ENCODE measurements at regions of chr3 and their contacts with region 1.

Region 1: GRCh38 chr3:130905551-130905950 is 11.7 kb downstream of the ATP2C1 start:
- DNase-seq: no peak
- H3K4me3 Mint-ChIP-seq: no peak overlapping the region
- H3K27ac Mint-ChIP-seq: no peak overlapping the region
- H3K4me1 Mint-ChIP-seq: peaks cover 51% of the 10 kb centered on the region
- H3K27me3 Mint-ChIP-seq: no peaks in the 10 kb centered on the region

Region 2: DNA sequence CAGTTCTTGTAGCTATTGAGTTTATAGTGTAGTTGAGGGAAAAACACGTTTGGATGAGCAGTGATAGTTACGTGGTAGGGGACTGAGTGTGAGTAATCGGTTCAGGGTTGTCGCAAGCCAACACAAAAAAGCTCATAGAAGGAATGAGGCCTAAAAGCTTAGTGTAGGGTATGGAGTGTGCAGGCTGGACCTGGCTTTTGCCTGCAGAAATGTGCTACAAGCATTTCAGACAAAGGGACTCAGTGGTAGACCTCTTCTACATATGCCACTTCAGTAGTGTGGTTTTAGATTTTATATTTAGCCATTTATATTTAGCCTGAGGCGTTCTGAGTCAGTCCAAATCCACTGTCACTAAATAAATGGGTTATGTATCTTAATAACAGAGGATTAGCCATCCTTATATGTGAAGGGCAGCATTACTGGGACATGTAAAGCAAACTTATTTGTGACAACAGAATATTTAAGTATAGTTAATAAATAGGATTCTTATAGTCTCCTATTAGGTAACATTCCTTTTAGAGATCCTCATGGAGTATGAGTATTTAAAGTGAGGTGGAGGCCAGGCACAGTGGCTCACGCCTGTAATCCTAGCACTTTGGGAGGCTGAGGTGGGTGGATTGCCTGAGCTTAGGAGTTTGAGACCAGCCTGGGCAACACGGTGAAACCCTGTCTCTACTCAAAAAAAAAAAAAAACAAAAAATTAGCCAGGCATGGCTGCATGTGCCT is 10.2 kb after region 1 on chr3:
- intact Hi-C with region 1: loop called (anchors 2 kb)
- DNase-seq: no peak
- H3K4me3 Mint-ChIP-seq: no peak overlapping the region
- H3K27ac Mint-ChIP-seq: no peak overlapping the region
- H3K4me1 Mint-ChIP-seq: peaks cover 24% of the 10 kb centered on the region
- H3K27me3 Mint-ChIP-seq: no peaks in the 10 kb centered on the region

Region 3: DNA sequence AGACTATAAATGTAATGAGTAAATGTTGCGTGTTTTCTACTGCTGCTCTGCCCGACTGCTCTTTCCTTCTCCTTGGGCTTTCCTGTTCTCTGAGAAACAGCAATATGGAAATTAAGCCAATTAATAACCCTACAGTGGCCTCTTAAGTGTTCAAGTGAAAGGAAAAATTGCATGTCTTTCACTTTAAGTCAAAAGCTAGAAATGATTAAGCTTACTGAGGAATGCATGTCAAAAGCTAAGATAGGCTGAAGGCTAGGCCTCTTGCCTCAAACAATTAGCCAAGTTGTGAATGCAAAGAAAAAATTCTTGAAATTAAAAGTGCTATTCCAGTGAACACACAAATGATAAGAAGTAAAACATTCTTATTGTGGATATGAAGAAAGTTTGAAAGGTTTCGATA is 43.4 kb after region 1 on chr3:
- intact Hi-C with region 1: loop called (anchors 5 kb)
- DNase-seq: no peak
- H3K4me3 Mint-ChIP-seq: no peak overlapping the region
- H3K27ac Mint-ChIP-seq: no peak overlapping the region
- H3K4me1 Mint-ChIP-seq: peaks cover 11% of the 10 kb centered on the region
- H3K27me3 Mint-ChIP-seq: no peaks in the 10 kb centered on the region

Region 4: DNA sequence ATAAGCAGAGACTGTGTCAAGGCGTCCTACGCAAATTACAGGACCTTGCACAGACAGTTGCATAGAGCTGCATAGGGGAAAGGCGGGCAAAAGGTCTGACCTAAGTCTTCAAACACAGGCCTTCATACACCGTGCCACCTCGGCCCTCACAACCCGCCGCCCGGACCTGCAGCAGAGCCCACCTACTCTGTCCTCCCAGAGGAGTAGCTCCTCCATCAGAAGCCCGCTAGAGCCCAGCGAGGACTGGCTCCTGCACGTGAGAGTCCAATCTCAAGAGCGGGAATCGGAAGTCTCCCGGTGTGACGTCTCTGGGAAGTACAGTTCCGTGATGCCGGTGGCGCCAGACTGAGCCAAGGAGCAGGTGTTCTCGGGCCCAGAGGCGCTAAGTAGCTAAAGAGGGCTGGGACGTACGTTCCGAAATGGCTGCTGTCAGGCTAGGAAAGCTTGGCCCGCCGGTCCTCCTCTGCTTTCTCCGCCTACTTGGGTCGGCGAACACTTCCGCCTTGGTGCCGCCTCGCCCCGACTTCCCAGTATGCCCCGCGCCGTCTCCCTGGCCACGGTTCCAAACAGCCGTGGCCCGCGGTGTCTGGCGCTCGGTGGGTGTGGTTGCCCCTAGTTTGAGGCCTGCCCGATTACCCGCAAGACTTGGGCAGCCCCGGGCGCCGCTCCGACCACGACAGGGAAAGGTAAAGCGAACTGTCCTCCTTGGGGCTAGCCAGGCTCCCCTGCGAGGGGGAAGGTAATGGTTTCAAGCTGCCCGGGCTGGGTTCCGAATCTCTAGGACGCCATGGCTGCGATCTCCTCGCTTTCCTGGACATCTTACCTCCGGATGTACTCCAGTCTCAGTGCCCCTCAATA is 121.0 kb after region 1 on chr3 and contains the starts of genes ASTE1 and NEK11:
- intact Hi-C with region 1: loop called (anchors 5 kb)
- DNase-seq: peak; percentile 89
- H3K4me3 Mint-ChIP-seq: peak within 1 kb of the TSS; percentile 88
- H3K27ac Mint-ChIP-seq: peak within 1 kb of the TSS; percentile 93
- H3K4me1 Mint-ChIP-seq: peaks cover 34% of the 10 kb centered on the region
- H3K27me3 Mint-ChIP-seq: peaks cover 4% of the 10 kb centered on the region
- total RNA-seq, gene ASTE1: 7.4 and 8.0 TPM in 2 replicates
- total RNA-seq, gene NEK11: 1.1 and 1.2 TPM in 2 replicates

Region 5: DNA sequence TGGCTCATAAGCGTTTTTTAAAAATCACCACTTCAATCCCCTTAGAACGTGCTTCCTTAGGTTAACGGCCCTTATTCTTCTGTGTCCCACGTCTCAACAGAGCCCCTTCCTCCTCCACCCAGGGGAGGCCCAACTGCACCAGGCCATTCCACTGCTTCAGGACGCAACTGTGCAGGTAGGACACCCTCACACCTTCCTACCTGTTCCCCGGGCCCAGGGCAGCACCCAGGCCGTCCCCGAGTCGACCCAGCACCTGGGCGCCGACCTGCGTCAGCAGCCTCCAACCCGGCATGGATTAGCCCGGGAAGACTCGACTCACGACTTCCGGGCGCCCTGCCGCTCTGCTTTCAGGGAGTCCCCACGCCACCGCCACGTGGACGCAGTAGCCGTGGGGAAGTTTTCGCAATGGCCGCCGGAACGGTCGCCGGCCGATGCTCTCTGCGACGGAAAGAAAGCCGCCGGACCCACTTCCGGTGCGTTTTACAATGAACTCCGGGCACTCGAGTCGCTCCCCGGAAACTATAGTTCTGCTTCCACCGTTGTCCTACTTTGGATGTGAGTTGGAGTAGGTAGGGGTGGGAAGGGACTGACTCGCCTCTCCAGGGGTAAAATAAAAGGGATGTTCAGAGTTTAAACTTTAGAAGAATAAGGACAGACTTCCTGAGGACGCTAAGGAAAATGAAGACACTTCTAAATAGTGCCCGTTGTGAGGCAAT is 597.1 kb after region 1 on chr3 and contains the start of gene MRPL3:
- intact Hi-C with region 1: loop called (anchors 5 kb)
- DNase-seq: peak; percentile 75
- H3K4me3 Mint-ChIP-seq: peak within 1 kb of the TSS; percentile 99
- H3K27ac Mint-ChIP-seq: peak within 1 kb of the TSS; percentile 97
- H3K4me1 Mint-ChIP-seq: peaks cover 31% of the 10 kb centered on the region
- H3K27me3 Mint-ChIP-seq: no peaks in the 10 kb centered on the region
- total RNA-seq, gene MRPL3: 149 and 157 TPM in 2 replicates